WTC11 (cell line): ENCODE measurements at regions of chr3 and their contacts with region 1.

Region 1: DNA sequence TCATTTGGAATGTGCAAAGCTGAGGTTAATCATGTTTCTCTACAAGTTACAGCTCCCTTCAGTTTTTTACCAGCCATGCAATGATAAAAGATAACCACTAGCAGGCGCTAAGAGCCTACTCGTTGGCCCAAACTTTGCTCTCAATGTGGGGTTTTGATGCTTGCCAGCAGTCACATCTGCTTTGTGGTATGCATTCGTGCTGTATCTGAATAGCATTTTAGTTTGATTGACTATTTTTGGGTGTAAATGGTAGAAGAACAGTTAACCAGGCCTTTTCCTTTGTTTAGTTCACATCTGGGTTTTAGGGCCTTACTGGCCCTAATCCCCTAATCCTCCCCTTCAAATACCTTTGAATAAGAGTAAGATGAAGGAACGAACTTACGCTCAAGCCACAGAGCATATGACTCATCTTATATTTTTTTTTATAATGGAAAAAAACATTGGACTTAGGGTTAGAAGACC is 4.4 kb upstream of the CLDN11 start:
- DNase-seq: peak; percentile 41
- ATAC-seq: peak; percentile 42
- H3K4me3 Mint-ChIP-seq: no peak overlapping the region
- H3K27ac Mint-ChIP-seq: no peak overlapping the region
- H3K4me1 Mint-ChIP-seq: peaks cover 15% of the 10 kb centered on the region
- H3K27me3 Mint-ChIP-seq: peaks cover 30% of the 10 kb centered on the region
- CTCF ChIP-seq: peak; percentile 87

Region 2: DNA sequence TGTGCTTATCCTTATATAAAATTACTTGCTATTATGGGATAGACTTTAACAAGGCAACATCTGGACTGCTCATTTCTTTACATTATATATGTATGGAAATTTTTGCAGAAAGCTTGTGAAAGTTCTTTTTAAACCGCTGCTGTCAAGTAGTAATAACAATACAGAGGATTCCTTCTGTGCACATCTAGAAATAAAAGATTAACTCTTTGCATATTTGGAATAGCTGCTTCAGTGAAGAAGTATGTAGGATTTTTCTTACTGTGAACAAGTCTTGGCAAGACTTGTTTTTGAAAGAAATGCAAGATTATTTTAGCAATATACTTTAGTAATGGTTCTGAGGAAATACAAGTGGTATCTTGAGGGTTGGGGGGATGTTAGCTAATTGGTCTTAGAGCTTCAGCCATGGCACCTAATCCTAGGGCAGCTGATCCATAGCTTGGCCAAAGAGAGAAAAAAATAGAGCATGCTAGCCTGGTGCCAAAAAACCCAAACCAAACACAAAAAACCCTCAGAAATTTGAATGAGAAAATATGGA is 187.7 kb before region 1 on chr3:
- CTCF ChIA-PET with region 1: no interaction called
- POLR2A ChIA-PET with region 1: no interaction called
- DNase-seq: no peak
- ATAC-seq: no peak
- H3K4me3 Mint-ChIP-seq: no peak overlapping the region
- H3K27ac Mint-ChIP-seq: peak overlapping the region; percentile 12; the same call in 1 of the 2 replicates
- H3K4me1 Mint-ChIP-seq: peaks cover 42% of the 10 kb centered on the region
- H3K27me3 Mint-ChIP-seq: no peaks in the 10 kb centered on the region
- CTCF ChIP-seq: no peak

Region 3: GRCh38 chr3:170307671-170308403 is 106.4 kb before region 1 on chr3:
- CTCF ChIA-PET with region 1: interaction called, 21 read pairs
- POLR2A ChIA-PET with region 1: no interaction called
- DNase-seq: no peak
- ATAC-seq: no peak
- H3K4me3 Mint-ChIP-seq: no peak overlapping the region
- H3K27ac Mint-ChIP-seq: peak overlapping the region; percentile 55
- H3K4me1 Mint-ChIP-seq: peaks cover 21% of the 10 kb centered on the region
- H3K27me3 Mint-ChIP-seq: no peaks in the 10 kb centered on the region
- CTCF ChIP-seq: no peak

Region 4: DNA sequence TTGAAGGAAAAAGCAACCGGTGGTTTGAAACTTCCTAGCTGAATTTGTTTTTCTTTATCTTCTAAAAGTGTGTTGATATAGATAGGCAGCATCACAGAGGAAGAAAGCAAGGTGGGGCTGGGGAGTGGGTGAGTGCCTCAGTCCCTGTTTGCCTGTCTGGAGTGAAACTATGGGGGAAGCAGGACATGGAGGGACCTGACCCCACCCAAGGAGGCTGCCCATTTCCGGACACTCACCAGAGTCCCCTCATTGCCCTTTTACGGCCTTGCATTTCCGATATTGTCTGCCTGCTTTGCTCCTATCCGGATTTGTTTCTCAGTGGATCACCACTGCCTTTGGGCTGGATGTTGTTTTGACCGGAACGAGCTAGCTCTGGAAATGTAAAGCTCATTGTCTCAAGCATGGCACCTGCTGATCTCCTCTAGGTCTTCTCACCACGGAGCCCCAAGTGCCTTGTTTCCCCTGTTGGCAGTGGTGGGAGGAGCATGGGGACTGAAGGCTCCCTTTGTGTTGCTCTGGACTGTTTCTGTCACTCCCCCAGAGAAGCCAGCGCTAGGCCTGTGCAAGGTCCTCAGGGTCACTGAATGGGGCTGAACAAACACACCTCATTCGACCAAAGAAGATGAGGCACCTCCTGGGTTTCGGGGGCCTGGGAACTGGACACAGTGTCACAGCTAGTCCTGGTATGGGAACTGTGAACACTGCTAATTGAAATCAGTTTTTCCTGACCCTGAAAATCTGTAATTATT is 11.4 kb after region 1 on chr3:
- CTCF ChIA-PET with region 1: interaction called, 17 read pairs
- POLR2A ChIA-PET with region 1: interaction called, 3 read pairs
- DNase-seq: peak; percentile 37
- ATAC-seq: peak; percentile 95
- H3K4me3 Mint-ChIP-seq: peak overlapping the region; percentile 26; the same call in 1 of the 2 replicates
- H3K27ac Mint-ChIP-seq: peak overlapping the region; percentile 81
- H3K4me1 Mint-ChIP-seq: peaks cover 27% of the 10 kb centered on the region
- H3K27me3 Mint-ChIP-seq: peaks cover 8% of the 10 kb centered on the region
- CTCF ChIP-seq: no peak

Region 5: DNA sequence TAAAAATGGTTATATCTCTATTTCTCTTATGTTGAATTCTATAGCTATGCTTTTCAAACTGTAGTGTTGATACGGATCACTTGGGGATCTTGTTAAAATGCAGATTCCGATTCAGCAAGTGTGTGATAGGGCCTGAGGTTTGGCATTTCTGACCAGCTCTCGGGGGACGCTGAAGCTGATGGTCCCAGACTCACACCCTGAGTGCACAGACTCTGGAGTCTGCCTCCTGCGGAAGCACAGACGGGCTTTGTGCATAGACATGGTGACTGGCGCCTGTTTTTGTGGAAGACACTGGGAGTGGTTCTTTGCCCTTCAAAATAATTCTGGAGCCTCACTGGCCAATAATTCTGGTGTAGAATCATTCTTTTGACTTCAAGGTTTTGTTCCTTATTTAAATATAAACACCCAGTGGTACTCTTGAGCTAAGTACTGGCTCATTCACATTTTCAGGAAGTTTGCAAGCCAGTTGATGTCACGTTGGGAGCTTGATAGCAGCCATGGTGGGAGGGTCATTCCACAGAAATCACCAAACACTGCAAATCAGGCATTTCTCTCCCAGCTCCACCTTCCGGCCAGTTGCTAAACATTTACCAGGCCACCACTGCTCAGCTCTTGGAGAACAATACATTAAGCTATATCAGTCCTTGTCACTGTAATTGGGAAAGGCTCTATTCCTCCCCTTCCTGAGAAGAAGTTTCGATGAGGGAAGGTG is 23.6 kb after region 1 on chr3:
- CTCF ChIA-PET with region 1: interaction called, 14 read pairs
- POLR2A ChIA-PET with region 1: no interaction called
- DNase-seq: no peak
- ATAC-seq: peak; percentile 74
- H3K4me3 Mint-ChIP-seq: no peak overlapping the region
- H3K27ac Mint-ChIP-seq: no peak overlapping the region
- H3K4me1 Mint-ChIP-seq: peaks cover 10% of the 10 kb centered on the region
- H3K27me3 Mint-ChIP-seq: no peaks in the 10 kb centered on the region; the same call in 1 of the 2 replicates
- CTCF ChIP-seq: no peak

Region 6: DNA sequence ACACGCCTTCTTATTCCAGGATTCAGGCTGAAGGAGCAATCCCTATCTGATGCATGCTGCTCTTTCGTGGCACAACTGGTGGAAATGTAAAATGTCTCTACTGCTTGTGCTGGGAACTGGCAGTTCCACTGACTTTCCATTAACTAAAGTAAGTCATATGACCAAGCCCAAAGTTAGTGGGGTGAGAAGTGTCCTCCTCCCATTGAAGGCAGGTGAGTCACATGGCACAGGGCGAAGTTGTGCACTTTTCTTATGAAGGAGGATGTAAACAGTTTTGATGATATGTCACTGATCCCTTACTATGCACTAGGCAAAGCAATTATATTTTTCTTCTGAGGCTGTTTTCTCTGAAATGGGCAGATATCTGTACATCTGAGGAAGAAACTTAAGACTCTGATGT is 120.0 kb after region 1 on chr3:
- CTCF ChIA-PET with region 1: no interaction called
- POLR2A ChIA-PET with region 1: no interaction called
- DNase-seq: no peak
- ATAC-seq: no peak
- H3K4me3 Mint-ChIP-seq: no peak overlapping the region
- H3K27ac Mint-ChIP-seq: no peak overlapping the region
- H3K4me1 Mint-ChIP-seq: no peaks in the 10 kb centered on the region
- H3K27me3 Mint-ChIP-seq: peaks cover 3% of the 10 kb centered on the region
- CTCF ChIP-seq: no peak

Region 7: GRCh38 chr3:170584585-170585007 is 170.4 kb after region 1 on chr3:
- CTCF ChIA-PET with region 1: interaction called, 26 read pairs
- POLR2A ChIA-PET with region 1: interaction called, 5 read pairs
- DNase-seq: peak; percentile 93
- ATAC-seq: peak; percentile 88
- H3K4me3 Mint-ChIP-seq: peak overlapping the region; percentile 78
- H3K27ac Mint-ChIP-seq: no peak overlapping the region
- H3K4me1 Mint-ChIP-seq: peaks cover 10% of the 10 kb centered on the region
- H3K27me3 Mint-ChIP-seq: peaks cover 63% of the 10 kb centered on the region
- CTCF ChIP-seq: no peak

Region 8: GRCh38 chr3:170811928-170812591 is 397.8 kb after region 1 on chr3:
- CTCF ChIA-PET with region 1: interaction called, 138 read pairs
- POLR2A ChIA-PET with region 1: no interaction called
- DNase-seq: peak; percentile 77
- ATAC-seq: peak; percentile 82
- H3K4me3 Mint-ChIP-seq: no peak overlapping the region
- H3K27ac Mint-ChIP-seq: no peak overlapping the region
- H3K4me1 Mint-ChIP-seq: peaks cover 60% of the 10 kb centered on the region
- H3K27me3 Mint-ChIP-seq: peaks cover 11% of the 10 kb centered on the region
- CTCF ChIP-seq: peak; percentile 84